KBM-7 (cell line): ENCODE measurements at regions of chr1 and their contacts with region 1.

Region 1: DNA sequence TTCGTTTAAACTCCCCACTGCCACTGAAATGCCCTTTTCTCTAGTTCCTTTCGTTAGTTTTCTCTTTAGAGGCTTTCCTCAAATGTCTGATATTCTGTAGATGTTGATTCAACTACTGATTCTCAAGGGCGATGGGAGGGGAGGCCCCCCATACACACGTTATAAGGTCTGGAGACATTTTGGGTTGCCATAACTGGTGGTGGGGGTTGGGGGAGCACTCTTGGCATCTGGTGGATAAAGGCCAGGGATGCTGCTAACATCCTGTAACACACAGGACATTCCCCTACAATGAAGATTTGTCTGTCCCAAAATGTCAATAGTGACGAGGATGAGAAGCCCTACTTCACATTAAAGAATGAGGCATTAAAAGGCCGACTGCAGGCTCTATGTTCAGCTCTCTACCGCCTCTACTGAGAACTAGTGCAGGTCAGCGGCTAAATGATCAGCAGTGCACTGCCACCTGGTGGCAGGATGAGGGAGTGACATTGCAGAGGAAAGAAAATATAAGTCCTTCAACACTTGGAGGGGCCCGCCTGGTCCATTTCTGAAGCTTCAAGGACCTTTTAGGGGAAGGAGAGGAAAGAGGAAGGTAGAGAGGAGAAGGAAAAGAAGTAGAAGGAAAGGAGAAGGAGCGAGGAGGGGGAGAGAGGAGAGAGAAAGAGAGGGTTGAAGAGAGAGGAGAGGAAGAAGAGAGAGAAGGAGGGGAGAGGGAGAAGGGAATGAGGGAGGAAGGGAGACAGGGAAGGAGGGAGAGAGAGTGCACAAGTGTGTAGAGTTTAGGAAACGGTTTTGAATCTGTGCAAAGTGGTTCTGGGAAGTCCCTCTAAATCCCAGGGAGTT is 29.4 kb downstream of the ALG14 start:
- DNase-seq: peak; percentile 86

Region 2: GRCh38 chr1:94514095-94514727 is 529.1 kb before region 1 on chr1:
- in situ Hi-C with region 1: loop called (anchors 25 kb)
- DNase-seq: peak; percentile 58

Region 3: GRCh38 chr1:94579876-94580294 is 463.5 kb before region 1 on chr1:
- in situ Hi-C with region 1: no loop called
- DNase-seq: no peak

Region 4: DNA sequence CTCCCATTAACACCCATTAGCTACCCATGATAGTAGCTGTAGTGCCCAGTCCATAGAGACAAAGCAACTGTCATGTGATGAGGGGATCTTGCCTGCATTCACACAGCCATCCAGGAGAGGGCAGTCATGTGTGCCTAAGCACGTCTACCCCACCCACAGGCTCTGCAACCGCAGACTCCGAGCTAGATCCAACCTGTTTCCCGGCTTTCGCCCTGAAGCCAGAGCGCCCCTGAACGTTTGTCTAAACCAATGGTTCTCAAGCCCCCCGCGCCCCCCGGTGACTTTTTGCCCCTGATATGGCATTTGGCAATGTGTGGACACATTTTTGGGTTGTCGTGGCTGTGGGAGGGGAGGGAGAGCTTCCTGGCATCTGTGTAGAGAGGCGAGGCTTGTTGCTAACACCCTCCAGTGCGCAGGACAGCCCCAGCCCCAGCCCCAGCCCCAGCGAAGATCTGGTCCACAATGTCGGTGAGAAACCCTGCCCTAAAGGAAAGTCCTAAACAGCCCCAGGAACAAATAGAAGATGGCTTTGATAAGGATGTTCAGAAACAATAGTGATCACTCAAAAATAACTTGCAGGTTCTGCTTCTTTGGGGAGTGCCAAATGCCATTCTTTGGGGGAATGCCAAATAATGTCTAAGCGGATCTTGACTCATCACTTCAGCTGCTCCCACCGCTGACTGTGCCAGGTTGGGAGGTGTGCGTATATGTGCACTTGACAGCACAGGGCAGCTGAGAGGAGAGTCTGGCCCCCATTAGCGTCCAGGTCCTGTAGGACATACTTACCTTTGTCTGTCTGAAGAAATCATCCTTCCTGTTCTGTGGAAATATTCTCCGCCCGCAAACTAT is 188.7 kb before region 1 on chr1:
- in situ Hi-C with region 1: loop called (anchors 25 kb)
- DNase-seq: peak; percentile 89

Region 5: DNA sequence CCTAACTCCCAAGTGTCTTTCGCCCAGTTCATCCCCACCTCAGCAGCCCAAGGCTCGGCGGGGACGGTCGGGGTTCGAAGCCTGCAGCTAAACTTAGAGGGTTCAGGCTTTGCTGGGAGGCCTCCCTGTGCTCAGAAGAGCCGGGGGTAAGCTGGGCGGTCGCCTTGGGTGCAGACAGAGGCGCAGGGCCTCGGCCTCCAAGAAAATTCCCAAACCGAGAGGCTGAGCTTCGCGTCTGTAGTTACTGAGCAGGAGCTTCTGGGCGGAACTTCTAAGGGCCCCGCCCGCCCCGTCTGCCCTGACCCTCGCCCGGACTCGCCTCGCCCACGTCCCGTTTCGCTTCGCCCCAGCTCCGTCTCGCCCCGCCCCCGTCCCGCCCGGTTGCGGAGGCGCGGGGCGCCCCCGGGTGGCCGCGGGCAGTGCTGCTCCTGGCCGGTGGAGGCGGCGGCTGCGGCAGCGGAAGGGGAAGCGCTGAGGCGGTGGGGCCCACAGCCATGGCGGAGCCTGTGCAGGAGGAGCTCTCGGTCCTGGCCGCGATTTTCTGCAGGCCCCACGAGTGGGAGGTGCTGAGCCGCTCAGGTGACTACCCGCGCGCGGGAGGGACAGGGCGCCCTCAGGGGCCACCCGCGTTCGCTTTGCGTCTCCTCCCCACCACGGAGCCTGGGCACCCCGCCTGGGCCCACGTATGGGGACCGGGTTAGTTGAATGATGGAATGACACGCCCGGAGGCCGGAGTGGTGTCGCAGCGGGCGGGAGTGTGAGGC is 190.6 kb after region 1 on chr1 and contains the start of gene RWDD3:
- in situ Hi-C with region 1: no loop called
- DNase-seq: peak; percentile 91